GM10248 (cell line): ENCODE measurements at regions of chr11 and their contacts with region 1.

Region 1: DNA sequence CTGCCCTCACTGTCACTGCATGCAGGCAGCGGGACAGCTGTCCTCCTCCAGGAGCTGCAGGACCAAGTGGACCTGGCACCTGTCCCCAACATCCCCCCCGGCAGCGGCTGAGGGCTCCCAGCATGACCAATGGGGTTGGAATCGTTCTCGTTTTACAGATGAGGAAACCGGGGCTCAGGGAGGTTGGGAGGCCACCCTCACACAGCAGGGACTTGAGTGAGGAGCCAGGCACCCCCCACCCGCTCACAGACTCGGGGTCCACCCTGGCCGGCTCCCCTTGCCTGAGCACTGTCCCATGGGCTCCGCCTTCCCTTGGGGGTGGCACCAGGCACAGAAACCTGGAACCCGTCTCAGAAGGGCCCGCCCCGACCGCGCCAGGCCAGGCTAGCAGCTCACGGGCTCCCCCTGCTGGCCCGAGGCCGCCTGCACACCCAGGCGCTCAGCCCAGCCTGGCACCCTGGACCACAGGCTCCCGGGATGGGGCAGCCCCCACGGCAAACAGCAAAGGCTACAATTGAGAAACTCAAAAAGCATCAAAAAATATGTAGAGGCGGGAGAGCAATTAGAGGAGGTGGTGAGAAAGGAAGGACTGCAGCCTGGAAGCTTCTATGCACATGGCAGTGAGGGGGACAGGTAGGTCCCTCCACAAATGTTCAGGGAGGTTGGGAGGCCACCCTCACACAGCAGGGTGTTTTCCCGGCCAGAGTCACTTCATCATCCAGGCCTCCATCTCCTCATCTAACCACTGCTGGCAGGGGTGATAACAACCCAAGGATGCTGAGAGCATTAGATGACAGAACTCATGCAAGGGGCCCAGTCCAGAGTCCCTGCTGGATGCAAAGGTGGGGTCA is 12.8 kb downstream of the MACROD1 start:
- DNase-seq: peak; percentile 94
- CTCF ChIP-seq: peak; percentile 97

Region 2: GRCh38 chr11:63768237-63769043 is 384.6 kb before region 1 on chr11 and contains the start of gene ZFTA:
- CTCF ChIA-PET with region 1: interaction called, 27 read pairs
- POLR2A ChIA-PET with region 1: no interaction called
- DNase-seq: peak; percentile 89
- CTCF ChIP-seq: peak; percentile 80

Region 3: GRCh38 chr11:63993993-63994392 is 159.1 kb before region 1 on chr11:
- CTCF ChIA-PET with region 1: interaction called, 11 read pairs
- POLR2A ChIA-PET with region 1: no interaction called
- DNase-seq: no peak
- CTCF ChIP-seq: no peak

Region 4: DNA sequence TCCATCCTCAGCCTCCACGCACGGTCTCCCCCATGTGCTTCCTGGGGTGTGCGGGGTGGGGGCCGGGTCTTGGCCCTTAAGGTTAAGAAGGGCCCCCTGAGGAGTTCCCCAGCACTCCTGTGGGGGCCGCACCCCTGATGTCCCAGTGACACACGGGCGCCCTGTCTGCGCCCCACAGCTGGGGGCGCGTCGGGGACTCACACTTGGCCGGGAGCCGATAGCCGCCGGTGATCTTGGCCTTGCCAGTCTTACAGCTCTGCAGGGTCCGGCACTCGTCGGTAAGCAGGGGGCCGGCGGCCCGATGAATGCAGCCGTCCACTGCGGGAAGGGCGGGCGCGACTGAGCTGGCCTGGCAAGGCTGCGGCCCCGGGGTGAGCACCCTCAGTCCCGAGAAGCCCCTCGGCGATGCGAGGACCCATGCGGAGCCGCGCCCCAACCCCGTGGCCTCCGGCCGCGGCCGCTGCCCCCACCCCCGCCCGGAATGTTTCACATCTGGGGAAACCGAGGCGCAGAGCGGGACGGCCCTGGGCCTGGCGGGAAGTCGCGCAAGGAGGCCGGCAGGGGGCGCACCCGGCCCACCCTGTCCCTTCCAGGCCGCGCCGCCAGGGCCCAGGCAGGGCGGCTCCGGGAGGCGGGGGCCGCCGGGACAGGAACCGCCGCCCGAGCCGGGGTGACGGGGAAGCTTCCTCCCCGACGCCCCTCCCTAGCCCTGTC is 152.9 kb before region 1 on chr11:
- CTCF ChIA-PET with region 1: interaction called, 135 read pairs
- POLR2A ChIA-PET with region 1: no interaction called
- DNase-seq: peak; percentile 90
- CTCF ChIP-seq: peak; percentile 87

Region 5: GRCh38 chr11:64131683-64132190 is 21.3 kb before region 1 on chr11:
- CTCF ChIA-PET with region 1: interaction called, 17 read pairs
- POLR2A ChIA-PET with region 1: no interaction called
- DNase-seq: no peak
- CTCF ChIP-seq: no peak

Region 6: DNA sequence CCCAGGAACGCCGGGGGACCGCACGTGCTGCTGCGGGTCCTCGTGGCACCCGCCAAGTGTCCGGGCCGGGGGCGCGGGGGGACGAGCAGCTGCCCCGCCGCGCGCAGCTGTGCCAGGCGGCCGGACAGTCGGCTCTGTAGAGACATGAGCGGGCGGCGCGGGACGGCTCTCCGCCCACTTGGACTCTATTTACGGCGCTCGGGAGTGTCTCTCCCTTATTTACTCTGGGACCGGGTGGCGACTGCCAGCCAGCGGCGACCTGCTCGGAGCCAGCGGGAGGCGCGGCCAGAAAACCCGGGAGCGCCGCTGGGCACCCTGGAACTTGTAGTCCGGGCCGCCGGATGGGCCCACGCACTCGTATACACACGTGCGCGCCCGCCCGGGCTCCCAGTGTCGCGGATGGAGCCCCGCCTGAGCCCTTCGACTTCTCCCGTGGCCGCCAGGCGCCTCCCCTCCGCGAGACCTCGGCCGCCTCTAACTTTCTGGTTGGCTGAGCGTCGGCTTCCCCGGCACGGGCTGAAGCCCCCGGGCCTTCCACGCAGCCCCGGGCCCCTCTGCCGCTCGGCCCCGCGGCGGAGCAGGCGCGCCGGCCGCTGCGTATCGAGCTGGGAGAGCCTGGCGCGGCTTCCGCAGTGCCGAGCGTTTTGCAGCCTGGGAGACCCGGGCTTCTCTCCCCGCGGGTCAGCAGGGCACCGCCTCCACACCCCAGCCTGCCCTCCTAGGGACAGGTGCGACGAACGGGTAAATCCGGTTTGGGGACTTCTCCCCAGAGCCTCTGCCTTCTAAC is 13.0 kb after region 1 on chr11 and contains the start of gene MACROD1:
- CTCF ChIA-PET with region 1: interaction called, 49 read pairs
- POLR2A ChIA-PET with region 1: no interaction called
- DNase-seq: peak; percentile 89
- CTCF ChIP-seq: no peak

Region 7: DNA sequence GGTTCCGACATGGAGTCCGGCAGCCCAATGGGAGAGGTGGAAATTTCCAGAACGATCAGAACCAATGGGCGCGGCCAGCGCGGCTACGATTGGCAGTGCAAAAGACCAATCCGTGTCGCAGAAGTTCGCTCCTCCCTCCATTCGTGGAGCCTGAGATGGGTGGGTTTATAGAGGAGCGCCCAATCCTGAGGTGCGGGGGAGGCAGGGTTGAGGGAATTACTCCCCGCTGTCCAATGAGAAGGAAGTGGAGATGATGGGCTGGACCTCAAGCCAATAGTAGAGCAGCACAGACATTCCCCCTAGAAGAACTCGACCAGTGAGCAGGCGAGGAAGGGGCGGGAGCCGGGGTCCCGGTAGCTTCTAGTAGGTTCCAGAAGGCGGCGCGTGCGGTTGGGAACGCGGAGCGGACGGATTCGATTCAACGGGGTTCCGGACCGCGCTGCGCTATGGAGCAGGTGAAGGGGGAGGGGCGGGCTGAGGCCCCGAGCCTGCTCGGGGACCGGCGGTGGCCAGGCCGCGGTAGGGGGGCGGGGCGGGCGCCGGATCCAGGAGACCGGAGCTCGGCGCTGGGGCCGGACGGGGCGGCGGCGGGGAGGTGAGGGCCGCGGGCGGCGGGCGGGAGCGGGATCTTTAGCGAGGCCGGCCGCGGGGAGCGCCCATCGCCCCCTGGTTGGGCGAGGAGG is 32.9 kb after region 1 on chr11 and contains the start of gene STIP1:
- CTCF ChIA-PET with region 1: interaction called, 11 read pairs
- POLR2A ChIA-PET with region 1: no interaction called
- DNase-seq: peak; percentile 97
- CTCF ChIP-seq: peak; percentile 22